Gastrocnemius medialis (tissue), 4 donors: ENCODE measurements at regions of chr19 and their contacts with region 1.

Region 1: GRCh38 chr19:29263305-29264135 is 50.6 kb upstream of the UQCRFS1 start:
- DNase-seq: peak; percentile 26 to 44
- ATAC-seq: peak; percentile 25 to 61
- H3K4me3 ChIP-seq: no peak overlapping the region
- H3K27ac ChIP-seq: peak overlapping the region in 1 of 4 donors; percentile 15
- H3K4me1 ChIP-seq: peaks cover 12 to 19% of the 10 kb centered on the region in 2 donors
- H3K27me3 ChIP-seq: no peaks in the 10 kb centered on the region
- CTCF ChIP-seq: peak; percentile 52 to 78 (median 68)
- POLR2A ChIP-seq: no peak

Region 2: DNA sequence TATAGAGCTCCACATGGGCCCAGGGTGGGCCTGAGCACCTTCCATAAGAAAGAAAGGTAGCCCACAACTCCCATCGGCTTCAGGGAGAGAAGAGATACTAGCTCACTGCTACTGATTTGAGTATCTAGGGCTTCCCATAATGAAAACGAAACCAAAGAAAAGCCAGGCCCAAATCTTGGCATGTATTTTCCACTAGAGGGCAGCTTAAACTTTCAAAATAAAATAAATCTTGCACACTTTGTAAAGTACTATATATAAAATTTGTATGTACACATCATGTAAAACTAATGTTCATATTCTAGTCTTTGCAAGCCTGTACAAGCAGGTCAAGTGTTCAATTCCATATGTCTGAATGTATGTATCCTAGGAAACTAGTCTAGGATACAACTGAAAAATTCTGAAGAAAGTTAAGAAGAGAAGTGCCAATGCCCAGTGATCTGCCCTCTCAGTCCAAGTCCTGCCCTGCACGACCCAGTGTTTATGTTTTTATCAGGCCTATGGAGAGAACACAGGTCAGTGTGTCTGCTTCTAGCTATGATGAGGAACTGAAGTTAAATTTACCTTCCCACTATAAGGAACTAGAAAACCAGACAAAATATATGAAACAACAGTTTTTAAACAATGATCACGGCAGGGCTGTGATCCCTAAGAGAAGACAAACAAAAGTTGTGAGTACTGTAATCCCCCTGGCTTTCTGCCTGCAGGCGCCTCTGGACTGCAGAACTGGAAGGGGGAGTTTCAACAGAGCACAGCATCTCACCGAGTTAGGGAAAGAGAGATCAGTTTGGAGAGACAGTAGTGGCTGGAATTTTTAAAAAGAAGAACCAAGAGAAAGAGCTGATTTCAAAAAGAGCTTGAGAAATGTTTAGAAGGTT is 526.3 kb before region 1 on chr19:
- in situ Hi-C with region 1: loop called in 2 of 4 experiments (anchors 10 to 25 kb)
- intact Hi-C with region 1: loop called (anchors 2 kb)
- DNase-seq: no peak
- ATAC-seq: peak in 1 of 2 donors; percentile 39
- H3K4me3 ChIP-seq: peak overlapping the region in 1 of 4 donors; percentile 6
- H3K27ac ChIP-seq: no peak overlapping the region
- H3K4me1 ChIP-seq: peaks cover 3 to 6% of the 10 kb centered on the region in 2 donors
- H3K27me3 ChIP-seq: no peaks in the 10 kb centered on the region
- CTCF ChIP-seq: peak in 3 of 5 experiments; percentile 8 to 40 (median 39)
- POLR2A ChIP-seq: no peak

Region 3: DNA sequence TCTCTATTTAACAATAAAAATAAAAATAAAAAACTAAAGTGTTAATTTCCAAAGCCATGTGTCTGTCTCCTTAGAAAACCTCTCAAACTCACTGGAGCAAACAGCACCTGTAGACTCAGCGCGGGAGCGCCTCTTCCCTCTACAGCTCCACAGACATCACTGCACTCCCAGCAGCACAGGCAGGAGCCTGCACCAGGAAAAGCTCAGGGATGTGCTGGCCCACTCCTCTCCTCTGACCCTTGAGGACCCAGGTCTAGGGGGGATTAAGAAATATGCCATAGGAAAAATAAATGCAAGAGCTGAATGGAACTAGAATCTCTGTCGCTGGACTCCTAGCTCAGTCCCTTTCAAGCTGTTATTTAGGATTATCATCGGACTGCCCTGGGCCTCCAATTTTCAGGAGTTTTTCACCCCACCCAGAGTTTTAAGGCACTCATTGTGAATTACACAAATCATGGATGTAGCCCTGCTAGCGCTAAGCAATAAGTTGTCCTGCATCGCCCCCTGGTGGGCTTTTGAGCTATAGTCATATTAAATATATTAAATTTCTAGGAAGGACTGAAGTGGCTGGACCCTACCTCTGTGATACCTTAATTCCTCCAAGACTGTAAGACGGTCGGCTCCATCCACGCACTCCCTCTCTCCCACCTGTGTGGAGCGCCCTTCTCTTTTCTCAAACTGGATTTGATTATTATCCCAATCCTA is 384.5 kb before region 1 on chr19:
- in situ Hi-C with region 1: loop called in 1 of 4 experiments (anchors 25 kb)
- intact Hi-C with region 1: no loop called
- DNase-seq: peak; percentile 19 to 32
- ATAC-seq: peak; percentile 56 to 61
- H3K4me3 ChIP-seq: no peak overlapping the region
- H3K27ac ChIP-seq: no peak overlapping the region
- H3K4me1 ChIP-seq: peaks cover 0 to 3% of the 10 kb centered on the region in 2 donors
- H3K27me3 ChIP-seq: no peaks in the 10 kb centered on the region
- CTCF ChIP-seq: peak; percentile 18 to 68 (median 60)
- POLR2A ChIP-seq: no peak

Region 4: DNA sequence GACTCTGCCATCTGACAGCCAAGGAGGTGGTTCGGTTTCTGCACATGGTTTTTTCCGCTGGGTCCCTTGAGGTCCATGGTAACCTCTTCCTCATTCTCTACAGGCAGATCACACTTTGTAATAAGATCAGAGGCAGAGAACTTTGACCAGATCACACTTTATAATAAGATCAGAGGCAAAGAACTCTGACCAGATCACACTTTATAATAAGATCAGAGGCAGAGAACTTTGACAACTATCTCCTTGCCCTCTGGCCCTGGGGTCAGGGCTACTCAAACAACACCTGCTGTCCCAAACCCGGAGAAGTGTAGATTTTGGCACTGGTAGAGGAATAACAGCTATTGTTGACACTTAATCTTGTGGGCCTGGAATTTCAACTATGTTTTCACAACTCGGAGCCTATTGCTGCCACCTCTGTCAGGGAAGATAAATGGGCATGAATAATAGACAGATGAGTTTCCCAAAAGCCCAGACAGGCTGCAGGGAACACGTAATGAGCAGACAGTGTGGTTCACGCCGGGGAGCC is 296.7 kb before region 1 on chr19:
- in situ Hi-C with region 1: no loop called
- intact Hi-C with region 1: loop called (anchors 5 kb)
- DNase-seq: no peak
- ATAC-seq: no peak
- H3K4me3 ChIP-seq: no peak overlapping the region
- H3K27ac ChIP-seq: no peak overlapping the region
- H3K4me1 ChIP-seq: peaks cover 0 to 3% of the 10 kb centered on the region in 2 donors
- H3K27me3 ChIP-seq: no peaks in the 10 kb centered on the region
- CTCF ChIP-seq: no peak
- POLR2A ChIP-seq: no peak

Region 5: DNA sequence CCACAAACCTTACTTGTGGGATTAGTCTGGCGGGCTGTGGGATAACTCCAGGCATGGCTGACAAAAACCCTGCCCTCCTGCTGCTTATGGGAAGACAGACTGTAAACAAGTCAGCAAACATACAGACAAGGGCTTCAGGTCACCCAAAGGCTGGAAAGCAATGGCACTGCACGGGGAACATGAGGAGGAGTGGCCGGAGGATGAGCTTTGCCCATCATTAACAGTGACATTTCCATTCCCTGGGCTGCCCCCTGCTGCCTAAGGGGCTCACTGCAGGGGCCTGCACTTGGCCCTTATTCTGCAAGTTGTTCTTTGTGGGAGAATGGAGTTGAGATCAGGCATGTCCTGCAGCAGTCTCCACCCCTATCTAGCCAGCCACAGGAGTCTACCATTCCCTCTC is 141.8 kb before region 1 on chr19:
- in situ Hi-C with region 1: loop called in 1 of 4 experiments (anchors 25 kb)
- intact Hi-C with region 1: loop called (anchors 1 kb)
- DNase-seq: no peak
- ATAC-seq: no peak
- H3K4me3 ChIP-seq: no peak overlapping the region
- H3K27ac ChIP-seq: no peak overlapping the region
- H3K4me1 ChIP-seq: no peaks in the 10 kb centered on the region
- H3K27me3 ChIP-seq: no peaks in the 10 kb centered on the region
- CTCF ChIP-seq: peak in 2 of 5 experiments; percentile 14 to 26
- POLR2A ChIP-seq: no peak

Region 6: DNA sequence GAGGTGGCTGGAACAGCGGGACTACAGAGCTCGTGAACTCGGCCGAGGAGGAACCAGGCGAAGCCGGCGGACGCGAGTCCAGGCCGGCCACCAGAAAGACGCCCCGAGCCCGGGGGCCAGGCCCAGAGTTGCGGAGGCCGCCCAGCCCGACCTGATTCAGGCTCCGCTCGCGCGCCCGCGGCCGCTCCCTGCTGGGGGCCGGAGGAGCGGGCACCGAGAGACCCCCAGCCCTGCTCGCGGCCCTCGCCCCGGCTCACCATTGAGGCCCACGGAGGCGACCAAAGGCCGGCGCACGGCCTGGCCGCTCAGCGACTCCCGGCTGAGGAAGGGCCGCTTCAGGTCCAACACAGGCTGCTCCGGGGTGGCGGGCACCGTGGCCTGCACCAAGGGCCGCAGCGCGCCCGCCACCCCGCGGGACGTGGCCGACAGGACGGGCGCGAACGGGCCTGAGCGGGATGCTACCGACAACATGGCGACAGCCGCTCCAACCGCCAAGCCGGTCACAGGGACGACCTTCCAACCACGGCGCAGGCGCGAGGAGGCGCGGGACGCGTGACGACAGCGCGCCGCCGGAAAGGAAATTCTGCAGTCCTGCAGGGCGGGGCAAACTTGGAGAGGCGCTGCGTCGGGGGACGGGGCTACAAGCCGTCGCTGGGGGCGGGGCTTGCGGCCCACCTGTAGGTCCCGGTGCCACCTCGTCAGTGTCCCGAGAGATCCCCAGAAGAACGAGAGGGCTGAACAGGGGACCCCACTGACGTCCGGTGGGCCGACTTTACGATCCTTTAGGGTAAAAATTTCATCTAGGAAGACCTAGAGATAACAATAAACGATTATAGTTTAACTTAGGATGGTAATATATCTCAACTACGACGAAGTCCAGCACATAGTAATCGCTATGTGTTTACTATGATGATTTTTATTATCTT is 50.6 kb before region 1 on chr19 and contains the start of gene UQCRFS1:
- in situ Hi-C with region 1: no loop called
- intact Hi-C with region 1: loop called (anchors 1 kb)
- DNase-seq: peak; percentile 90 to 94
- ATAC-seq: peak; percentile 93 to 97
- H3K4me3 ChIP-seq: peak within 1 kb of the TSS; percentile 70 to 84 (median 70)
- H3K27ac ChIP-seq: peak within 1 kb of the TSS; percentile 88 to 94 (median 92)
- H3K4me1 ChIP-seq: peaks cover 29 to 31% of the 10 kb centered on the region in 2 donors
- H3K27me3 ChIP-seq: no peaks in the 10 kb centered on the region
- CTCF ChIP-seq: no peak
- POLR2A ChIP-seq: peak; percentile 96 to 97
- total RNA-seq, gene UQCRFS1: 78.1 to 142 (median 106) TPM